ENCODE measurements at regions of chr11 and their contacts with region 1.

Region 1: GRCh38 chr11:117226388-117227385 is 5.2 kb downstream of the PCSK7 start:
- DNase-seq: peak; percentile 65
- ATAC-seq: peak; percentile 75
- H3K4me3 ChIP-seq: no peak overlapping the region
- H3K27ac ChIP-seq: no peak overlapping the region
- H3K4me1 ChIP-seq: peaks cover 14 to 24% of the 10 kb centered on the region in 2 experiments; a peak in 3 of 4 replicates
- H3K27me3 ChIP-seq: no peaks in the 10 kb centered on the region
- CTCF ChIP-seq: peak; percentile 67 to 91 (median 79)
- POLR2A ChIP-seq: no peak
- RAD21 ChIP-seq: peak; percentile 94

Region 2: GRCh38 chr11:116732271-116733042 is 494.2 kb before region 1 on chr11:
- CTCF ChIA-PET with region 1: interaction called, 8 read pairs
- POLR2A ChIA-PET with region 1: no interaction called
- RAD21 ChIA-PET with region 1: no interaction called
- intact Hi-C with region 1: loop called (anchors 1 kb)
- DNase-seq: peak; percentile 45
- ATAC-seq: peak; percentile 94
- H3K4me3 ChIP-seq: no peak overlapping the region
- H3K27ac ChIP-seq: no peak overlapping the region
- H3K4me1 ChIP-seq: peaks cover 0 to 4% of the 10 kb centered on the region in 2 experiments; a peak in 1 of 4 replicates
- H3K27me3 ChIP-seq: no peaks in the 10 kb centered on the region
- CTCF ChIP-seq: peak; percentile 64 to 90 (median 73); a peak in 5 of 6 replicates
- POLR2A ChIP-seq: no peak
- RAD21 ChIP-seq: peak; percentile 60

Region 3: DNA sequence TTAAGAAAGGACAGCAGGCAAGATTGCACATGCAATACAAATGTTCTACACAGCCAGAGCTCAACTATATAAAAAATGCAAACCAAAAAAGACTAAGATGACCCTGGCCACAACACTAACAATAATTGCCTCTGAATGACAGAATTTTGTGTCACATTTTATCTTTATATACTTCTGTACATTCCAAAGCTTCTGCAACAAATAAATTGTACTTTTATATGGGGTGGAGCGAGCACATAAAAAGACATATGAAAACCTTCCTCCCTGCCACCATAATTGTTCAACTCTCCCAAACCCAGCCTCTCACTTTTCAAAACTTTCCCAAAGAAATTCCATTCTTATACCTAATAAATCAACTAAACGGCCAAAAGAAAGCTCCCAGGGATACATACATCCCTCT is 464.6 kb before region 1 on chr11:
- CTCF ChIA-PET with region 1: no interaction called
- POLR2A ChIA-PET with region 1: no interaction called
- RAD21 ChIA-PET with region 1: no interaction called
- intact Hi-C with region 1: no loop called
- DNase-seq: no peak
- ATAC-seq: no peak
- H3K4me3 ChIP-seq: no peak overlapping the region
- H3K27ac ChIP-seq: no peak overlapping the region
- H3K4me1 ChIP-seq: no peaks in the 10 kb centered on the region
- H3K27me3 ChIP-seq: no peaks in the 10 kb centered on the region
- CTCF ChIP-seq: no peak
- POLR2A ChIP-seq: no peak
- RAD21 ChIP-seq: no peak

Region 4: DNA sequence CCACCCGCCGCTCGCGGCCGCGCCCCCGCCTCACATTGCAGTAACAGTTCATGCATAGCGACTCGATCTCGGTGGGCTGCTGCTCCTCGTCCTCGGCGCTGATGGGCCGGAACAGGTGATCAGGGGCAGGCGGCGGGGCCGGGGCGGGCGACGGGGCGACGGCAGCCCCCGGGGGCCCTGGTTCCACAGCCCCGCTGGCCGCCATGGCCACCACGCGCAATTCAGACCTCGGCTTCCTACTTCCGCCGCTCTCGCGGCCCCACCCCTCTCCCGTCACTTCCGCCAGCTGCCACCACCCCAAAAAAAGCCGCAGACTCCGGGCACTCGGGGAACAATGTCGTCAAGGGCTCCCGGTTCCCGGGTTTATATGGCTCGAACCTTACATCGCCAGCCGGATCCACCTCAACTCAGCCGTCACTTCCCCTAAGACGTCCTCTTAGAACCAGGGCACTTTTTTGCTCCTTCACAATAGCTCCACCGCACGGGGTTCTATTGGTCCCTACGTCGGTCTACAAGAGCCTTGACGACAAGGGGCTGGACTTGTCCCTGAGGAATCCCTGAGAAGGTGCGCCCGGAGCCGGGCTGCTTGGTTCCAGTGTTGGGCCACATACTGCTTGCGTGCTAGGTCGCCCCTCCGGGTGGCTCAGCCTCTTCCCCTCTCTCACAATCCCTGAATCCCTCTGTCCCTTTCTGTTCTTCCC is 438.8 kb before region 1 on chr11 and contains the start of gene ZPR1:
- CTCF ChIA-PET with region 1: interaction called, 9 read pairs
- POLR2A ChIA-PET with region 1: no interaction called
- RAD21 ChIA-PET with region 1: interaction called in 1 of 2 experiments, 3 read pairs
- intact Hi-C with region 1: loop called (anchors 5 kb)
- DNase-seq: peak; percentile 56
- ATAC-seq: peak; percentile 80
- H3K4me3 ChIP-seq: peak within 1 kb of the TSS; percentile 93 to 94
- H3K27ac ChIP-seq: peak within 1 kb of the TSS; percentile 43; the same call in 1 of the 2 replicates
- H3K4me1 ChIP-seq: peaks cover 12 to 29% of the 10 kb centered on the region in 2 experiments
- H3K27me3 ChIP-seq: no peaks in the 10 kb centered on the region
- CTCF ChIP-seq: no peak
- POLR2A ChIP-seq: no peak
- RAD21 ChIP-seq: no peak
- total RNA-seq, gene ZPR1: 56.3 TPM

Region 5: GRCh38 chr11:116879800-116880625 is 346.7 kb before region 1 on chr11:
- CTCF ChIA-PET with region 1: no interaction called
- POLR2A ChIA-PET with region 1: no interaction called
- RAD21 ChIA-PET with region 1: no interaction called
- intact Hi-C with region 1: loop called (anchors 1 kb)
- DNase-seq: peak; percentile 51
- ATAC-seq: peak; percentile 95
- H3K4me3 ChIP-seq: no peak overlapping the region
- H3K27ac ChIP-seq: no peak overlapping the region
- H3K4me1 ChIP-seq: peaks cover 0 to 5% of the 10 kb centered on the region in 2 experiments; a peak in 1 of 4 replicates
- H3K27me3 ChIP-seq: no peaks in the 10 kb centered on the region
- CTCF ChIP-seq: peak; percentile 74 to 77 (median 75); a peak in 5 of 6 replicates
- POLR2A ChIP-seq: no peak
- RAD21 ChIP-seq: peak; percentile 86

Region 6: GRCh38 chr11:116960930-116961329 is 265.8 kb before region 1 on chr11:
- CTCF ChIA-PET with region 1: no interaction called
- POLR2A ChIA-PET with region 1: no interaction called
- RAD21 ChIA-PET with region 1: no interaction called
- intact Hi-C with region 1: no loop called
- DNase-seq: peak; percentile 8
- ATAC-seq: peak; percentile 82
- H3K4me3 ChIP-seq: no peak overlapping the region
- H3K27ac ChIP-seq: no peak overlapping the region
- H3K4me1 ChIP-seq: peaks cover 12 to 28% of the 10 kb centered on the region in 2 experiments
- H3K27me3 ChIP-seq: no peaks in the 10 kb centered on the region
- CTCF ChIP-seq: no peak
- POLR2A ChIP-seq: no peak
- RAD21 ChIP-seq: no peak

Region 7: DNA sequence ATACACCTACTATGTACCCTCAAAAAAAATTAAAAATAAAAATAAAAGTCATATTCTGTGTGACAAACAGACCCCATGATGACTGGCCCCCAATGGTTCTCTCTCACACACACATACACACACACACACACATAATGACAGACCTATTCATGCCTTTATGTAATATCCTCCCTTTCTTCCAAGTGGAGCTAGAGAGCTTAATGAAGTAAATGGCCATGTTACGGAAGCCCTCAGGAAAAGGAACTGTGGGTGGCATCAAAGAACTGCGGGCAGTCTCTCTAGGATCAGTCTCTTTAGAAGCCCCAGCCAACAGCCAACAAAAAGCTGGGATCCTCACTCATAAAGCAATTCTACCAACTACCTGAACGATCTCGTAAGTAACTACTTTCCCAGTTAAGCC is 254.0 kb before region 1 on chr11:
- CTCF ChIA-PET with region 1: no interaction called
- POLR2A ChIA-PET with region 1: no interaction called
- RAD21 ChIA-PET with region 1: no interaction called
- intact Hi-C with region 1: no loop called
- DNase-seq: no peak
- ATAC-seq: no peak
- H3K4me3 ChIP-seq: no peak overlapping the region
- H3K27ac ChIP-seq: no peak overlapping the region
- H3K4me1 ChIP-seq: peaks cover 0 to 10% of the 10 kb centered on the region in 2 experiments; a peak in 2 of 4 replicates
- H3K27me3 ChIP-seq: no peaks in the 10 kb centered on the region
- CTCF ChIP-seq: no peak
- POLR2A ChIP-seq: no peak
- RAD21 ChIP-seq: 0 out of 2 replicates have a peak, but pooled peaks have one; percentile 4

Region 8: DNA sequence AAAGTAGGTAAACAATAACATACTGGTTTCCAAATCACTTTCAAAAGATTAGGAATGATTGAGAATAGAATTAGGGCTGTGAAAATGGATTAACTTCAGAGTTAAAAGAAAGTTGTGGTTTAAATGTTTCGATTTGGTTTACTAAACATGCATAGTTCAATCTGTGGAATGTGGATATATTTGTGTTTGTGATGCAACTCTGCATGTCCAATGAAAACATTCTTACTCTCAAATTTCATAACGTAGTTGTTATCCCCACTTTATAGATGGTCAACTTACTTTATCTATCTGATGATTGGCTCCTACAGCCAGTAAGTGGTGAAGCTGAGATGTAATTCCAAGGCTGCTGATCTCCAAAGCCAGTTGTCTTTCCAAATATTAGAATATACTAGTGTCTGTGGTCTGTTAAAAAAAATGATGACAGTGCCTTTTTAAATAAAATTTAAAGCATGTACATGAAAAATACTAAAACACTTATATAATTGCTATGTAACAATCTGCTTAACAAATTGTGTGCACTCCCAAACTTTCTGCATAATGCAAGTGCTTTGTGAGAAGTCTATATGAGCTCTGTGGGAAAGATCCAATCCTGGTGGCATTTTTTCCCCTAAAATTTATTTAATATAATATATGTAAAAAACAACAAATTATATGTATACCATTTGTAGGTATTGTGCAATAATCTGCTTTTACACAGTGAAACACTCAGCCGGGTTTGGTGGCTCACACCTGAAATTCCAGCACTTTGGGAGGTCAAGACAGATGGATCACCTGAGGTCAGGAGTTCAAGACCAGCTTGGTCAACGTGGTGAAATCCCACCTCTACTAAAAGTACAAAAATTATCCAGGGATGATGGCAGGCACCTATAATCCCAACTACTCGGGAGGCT is 118.7 kb before region 1 on chr11:
- CTCF ChIA-PET with region 1: no interaction called
- POLR2A ChIA-PET with region 1: no interaction called
- RAD21 ChIA-PET with region 1: interaction called in 1 of 2 experiments, 3 read pairs
- intact Hi-C with region 1: loop called (anchors 2 kb)
- DNase-seq: no peak
- ATAC-seq: no peak
- H3K4me3 ChIP-seq: no peak overlapping the region
- H3K27ac ChIP-seq: no peak overlapping the region
- H3K4me1 ChIP-seq: 0 out of 4 replicates have a peak, but pooled peaks cover 0 to 2% of the 10 kb centered on the region in 2 experiments
- H3K27me3 ChIP-seq: no peaks in the 10 kb centered on the region
- CTCF ChIP-seq: no peak
- POLR2A ChIP-seq: no peak
- RAD21 ChIP-seq: no peak

Region 9: GRCh38 chr11:117178210-117179034 is 48.3 kb before region 1 on chr11 and contains the start of gene SIDT2:
- CTCF ChIA-PET with region 1: interaction called, 30 read pairs
- POLR2A ChIA-PET with region 1: interaction called, 6 read pairs
- RAD21 ChIA-PET with region 1: interaction called, 3 read pairs
- intact Hi-C with region 1: loop called (anchors 1 kb)
- DNase-seq: peak; percentile 81
- ATAC-seq: peak; percentile 85
- H3K4me3 ChIP-seq: peak within 1 kb of the TSS; percentile 75 to 92
- H3K27ac ChIP-seq: peak within 1 kb of the TSS; percentile 69
- H3K4me1 ChIP-seq: peaks cover 41 to 62% of the 10 kb centered on the region in 2 experiments
- H3K27me3 ChIP-seq: no peaks in the 10 kb centered on the region
- CTCF ChIP-seq: no peak
- POLR2A ChIP-seq: no peak
- RAD21 ChIP-seq: no peak
- total RNA-seq, gene SIDT2: 37.0 TPM

Region 10: GRCh38 chr11:118046051-118046963 is 819.6 kb after region 1 on chr11:
- CTCF ChIA-PET with region 1: no interaction called
- POLR2A ChIA-PET with region 1: no interaction called
- RAD21 ChIA-PET with region 1: no interaction called
- intact Hi-C with region 1: no loop called
- DNase-seq: no peak
- ATAC-seq: no peak
- H3K4me3 ChIP-seq: no peak overlapping the region
- H3K27ac ChIP-seq: no peak overlapping the region
- H3K4me1 ChIP-seq: no peaks in the 10 kb centered on the region
- H3K27me3 ChIP-seq: peaks cover 15% of the 10 kb centered on the region
- CTCF ChIP-seq: no peak
- POLR2A ChIP-seq: no peak
- RAD21 ChIP-seq: no peak